Psoas muscle (tissue), 8 donors: ENCODE measurements at regions of chr11 and their contacts with region 1.

Region 1: DNA sequence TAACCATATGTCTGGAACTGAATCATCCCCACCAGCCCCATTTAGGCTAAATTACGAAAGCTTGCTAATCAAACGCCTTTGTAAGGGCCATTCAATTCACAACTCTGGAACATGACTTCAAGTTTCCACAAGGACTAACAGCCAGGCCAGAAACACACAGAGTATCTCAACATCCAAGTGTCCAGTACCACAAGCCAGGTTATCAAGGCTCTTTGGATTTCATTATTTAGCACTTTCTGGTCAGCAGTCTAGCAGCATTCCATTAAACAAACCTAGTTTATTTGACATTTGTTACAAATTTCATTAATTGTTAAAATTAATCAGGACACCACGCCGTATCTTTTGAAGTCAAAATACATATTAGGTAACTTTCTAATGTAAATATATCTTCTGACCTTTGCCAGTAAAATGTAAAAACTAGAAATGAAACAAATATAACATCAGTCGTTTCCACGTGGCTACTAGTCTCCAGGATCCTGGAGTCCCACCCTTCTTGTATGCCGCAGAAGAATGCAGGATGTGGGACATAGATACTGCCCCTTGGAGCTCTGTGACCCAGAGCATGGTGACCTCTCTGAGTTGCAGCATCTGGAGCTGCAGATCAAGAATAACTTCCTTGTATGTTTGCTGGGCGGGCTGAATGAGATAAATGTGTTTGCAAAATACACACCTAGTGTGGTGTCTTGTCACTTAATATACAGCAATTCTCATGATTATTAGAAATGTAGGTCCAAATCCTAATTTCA is 64.7 kb downstream of the MPPED2 start:
- DNase-seq: no peak
- ATAC-seq: no peak
- H3K4me3 ChIP-seq: no peak overlapping the region
- H3K27ac ChIP-seq: no peak overlapping the region
- H3K4me1 ChIP-seq: peaks cover 9% of the 10 kb centered on the region
- H3K27me3 ChIP-seq: no peaks in the 10 kb centered on the region
- CTCF ChIP-seq: no peak

Region 2: GRCh38 chr11:30459821-30460220 is 61.6 kb before region 1 on chr11:
- intact Hi-C with region 1: loop called in 1 of 2 experiments (anchors 10 kb)
- DNase-seq: no peak
- ATAC-seq: no peak
- H3K4me3 ChIP-seq: no peak overlapping the region
- H3K27ac ChIP-seq: no peak overlapping the region
- H3K4me1 ChIP-seq: peaks cover 9% of the 10 kb centered on the region
- H3K27me3 ChIP-seq: no peaks in the 10 kb centered on the region
- CTCF ChIP-seq: no peak

Region 3: DNA sequence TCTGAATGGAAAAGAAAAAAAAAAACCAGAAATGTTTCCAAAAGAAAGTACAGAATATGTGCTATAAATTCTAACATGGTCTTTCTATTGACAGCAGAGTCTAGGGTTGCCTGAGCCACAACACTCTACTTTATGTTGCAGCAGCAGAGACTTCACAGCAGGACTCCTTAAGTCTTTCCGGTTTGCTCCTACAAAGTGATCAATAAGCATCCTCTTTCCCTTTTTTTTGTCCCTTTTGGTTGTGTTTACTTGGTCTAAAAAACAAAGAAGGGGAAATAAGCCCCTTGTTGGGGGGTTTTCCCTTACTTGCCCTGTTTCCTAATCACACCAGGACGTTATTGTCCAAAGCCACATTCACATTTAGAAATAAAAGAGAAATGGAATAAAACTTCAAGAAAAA is 227.8 kb after region 1 on chr11:
- intact Hi-C with region 1: no loop called
- DNase-seq: no peak
- ATAC-seq: no peak
- H3K4me3 ChIP-seq: no peak overlapping the region
- H3K27ac ChIP-seq: no peak overlapping the region
- H3K4me1 ChIP-seq: no peaks in the 10 kb centered on the region
- H3K27me3 ChIP-seq: no peaks in the 10 kb centered on the region
- CTCF ChIP-seq: no peak